ENCODE measurements at regions of chr19 and their contacts with region 1.

Region 1: DNA sequence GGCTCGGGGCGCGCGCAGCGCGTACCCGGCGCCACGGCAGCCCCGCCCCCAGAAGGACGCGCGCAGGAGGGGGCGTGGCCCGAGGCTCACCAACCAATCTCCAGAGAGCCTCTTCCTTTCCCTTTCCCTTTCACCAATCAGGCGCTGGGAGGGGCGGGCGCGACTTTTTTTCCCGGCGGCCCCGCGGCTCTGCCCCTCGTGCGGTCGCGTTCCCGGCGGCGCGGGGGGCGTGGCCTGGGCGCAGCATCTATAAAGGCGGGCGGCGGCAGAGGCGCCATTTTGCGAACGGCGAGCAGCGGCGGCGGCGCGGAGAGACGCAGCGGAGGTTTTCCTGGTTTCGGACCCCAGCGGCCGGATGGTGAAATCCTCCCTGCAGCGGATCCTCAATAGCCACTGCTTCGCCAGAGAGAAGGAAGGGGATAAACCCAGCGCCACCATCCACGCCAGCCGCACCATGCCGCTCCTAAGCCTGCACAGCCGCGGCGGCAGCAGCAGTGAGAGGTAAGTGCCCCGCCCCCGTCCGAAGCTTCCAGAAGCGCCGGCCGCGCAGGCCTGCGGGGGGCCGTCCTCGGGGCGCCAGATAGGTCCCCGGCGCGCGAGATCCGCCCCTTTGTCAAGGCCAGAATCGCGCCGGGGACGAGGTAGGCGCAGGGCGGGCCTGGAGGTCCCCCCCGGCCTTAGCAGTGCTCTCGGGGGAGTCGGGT is 12.6 kb downstream of the PEAK3 start:
- DNase-seq: peak; percentile 97
- H3K4me3 Mint-ChIP-seq: peak overlapping the region; percentile 91
- H3K27ac Mint-ChIP-seq: peak overlapping the region; percentile 88
- H3K4me1 Mint-ChIP-seq: peaks cover 26% of the 10 kb centered on the region
- H3K27me3 Mint-ChIP-seq: no peaks in the 10 kb centered on the region
- CTCF ChIP-seq: no peak

Region 2: DNA sequence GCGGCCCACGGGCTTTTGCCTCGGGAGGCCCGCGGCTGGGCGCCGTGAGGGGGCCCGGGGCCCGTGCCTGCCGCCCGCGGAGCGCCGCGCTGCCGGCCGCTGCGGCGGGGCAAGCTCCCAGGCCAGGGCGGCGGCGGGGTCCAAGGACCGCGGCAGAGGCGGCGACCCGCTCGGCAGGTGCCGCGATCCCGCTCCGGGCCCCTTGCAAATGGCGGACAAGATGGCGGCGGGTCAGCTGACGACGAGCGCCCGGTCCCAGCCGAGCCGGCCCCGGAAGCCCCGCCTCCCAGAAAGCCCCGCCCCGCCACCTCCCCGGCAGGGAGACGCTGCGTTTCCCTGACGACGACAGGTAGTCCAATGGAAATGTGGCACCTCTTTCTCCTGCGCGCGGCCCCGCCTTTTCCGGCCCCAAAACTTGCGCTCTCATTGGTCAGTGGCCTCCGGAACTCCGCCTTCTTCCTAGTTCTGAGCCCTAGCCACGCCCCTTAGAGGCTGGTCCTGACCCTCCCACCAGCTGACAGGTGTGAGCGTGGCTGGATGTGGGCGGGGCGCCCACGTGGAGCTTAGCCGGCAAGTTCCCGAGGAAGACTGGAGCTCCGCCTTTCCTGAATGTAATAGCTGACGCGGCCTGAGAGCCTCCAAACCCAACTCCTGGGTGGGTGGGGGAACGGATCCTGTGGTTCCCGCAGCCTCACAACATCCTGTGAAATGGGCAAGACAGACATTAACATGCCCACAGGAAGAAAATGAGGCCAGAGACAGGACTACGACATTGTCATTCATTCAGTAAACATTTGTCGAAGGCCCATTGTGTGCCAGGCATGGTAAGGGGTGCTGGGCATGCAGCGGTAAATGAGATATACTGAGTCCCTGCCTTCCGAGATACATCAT is 117.8 kb before region 1 on chr19 and contains the start of gene AP3D1:
- CTCF ChIA-PET with region 1: interaction called, 3 read pairs
- POLR2A ChIA-PET with region 1: interaction called, 20 read pairs
- intact Hi-C with region 1: loop called (anchors 1 kb)
- DNase-seq: peak; percentile 100
- H3K4me3 Mint-ChIP-seq: peak within 1 kb of the TSS; percentile 78
- H3K27ac Mint-ChIP-seq: peak within 1 kb of the TSS; percentile 55
- H3K4me1 Mint-ChIP-seq: peaks cover 16% of the 10 kb centered on the region
- H3K27me3 Mint-ChIP-seq: no peaks in the 10 kb centered on the region
- CTCF ChIP-seq: no peak
- total RNA-seq, gene AP3D1: 172 and 181 TPM in 2 replicates

Region 3: DNA sequence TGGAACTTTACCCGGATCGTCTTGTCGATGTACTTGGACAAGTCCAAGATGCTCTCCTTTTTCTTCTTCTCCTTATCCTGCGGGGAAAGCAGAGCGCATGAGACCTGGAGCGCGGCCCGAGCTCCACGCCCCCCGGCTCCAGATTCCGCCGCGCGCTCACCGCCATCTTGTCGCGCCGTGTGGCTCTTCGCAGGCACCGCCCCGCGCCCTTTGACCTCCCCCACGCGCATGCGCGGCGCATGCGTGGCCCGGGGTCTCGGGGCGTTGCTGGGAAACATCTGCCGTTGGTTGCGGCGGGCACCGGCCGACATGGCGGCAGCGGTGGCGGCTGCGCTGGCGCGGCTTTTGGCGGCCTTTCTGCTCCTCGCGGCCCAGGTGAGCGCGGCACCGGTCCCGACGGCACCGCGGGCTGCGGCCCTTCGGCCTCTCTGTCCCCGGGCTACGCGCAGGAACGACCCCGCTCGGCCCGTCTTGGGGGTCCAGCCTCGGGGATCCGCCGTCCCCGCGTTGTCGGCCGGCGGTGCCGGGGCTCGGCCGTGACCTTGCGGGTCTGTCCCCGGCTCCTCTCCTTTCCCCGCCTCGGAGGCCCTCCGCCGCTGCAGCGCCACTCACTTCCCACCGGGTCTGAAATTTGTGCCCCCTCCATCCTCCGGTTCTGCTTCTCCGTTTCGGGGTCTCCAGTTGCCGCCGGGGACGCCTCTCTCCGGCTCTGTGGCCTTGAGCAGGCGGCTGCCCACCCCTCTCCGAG is 59.2 kb after region 1 on chr19 and contains the starts of genes LSM7 and SPPL2B:
- CTCF ChIA-PET with region 1: interaction called, 4 read pairs
- POLR2A ChIA-PET with region 1: interaction called, 18 read pairs
- intact Hi-C with region 1: no loop called
- DNase-seq: peak; percentile 91
- H3K4me3 Mint-ChIP-seq: peak within 1 kb of the TSS; percentile 93
- H3K27ac Mint-ChIP-seq: peak within 1 kb of the TSS; percentile 97
- H3K4me1 Mint-ChIP-seq: peaks cover 27% of the 10 kb centered on the region
- H3K27me3 Mint-ChIP-seq: no peaks in the 10 kb centered on the region
- CTCF ChIP-seq: no peak
- total RNA-seq, gene LSM7: 135 and 152 TPM in 2 replicates
- total RNA-seq, gene SPPL2B: 70.1 and 70.9 TPM in 2 replicates

Measured in MCF 10A (cell line).